ENCODE measurements at regions of chr11 and their contacts with region 1.

Region 1: DNA sequence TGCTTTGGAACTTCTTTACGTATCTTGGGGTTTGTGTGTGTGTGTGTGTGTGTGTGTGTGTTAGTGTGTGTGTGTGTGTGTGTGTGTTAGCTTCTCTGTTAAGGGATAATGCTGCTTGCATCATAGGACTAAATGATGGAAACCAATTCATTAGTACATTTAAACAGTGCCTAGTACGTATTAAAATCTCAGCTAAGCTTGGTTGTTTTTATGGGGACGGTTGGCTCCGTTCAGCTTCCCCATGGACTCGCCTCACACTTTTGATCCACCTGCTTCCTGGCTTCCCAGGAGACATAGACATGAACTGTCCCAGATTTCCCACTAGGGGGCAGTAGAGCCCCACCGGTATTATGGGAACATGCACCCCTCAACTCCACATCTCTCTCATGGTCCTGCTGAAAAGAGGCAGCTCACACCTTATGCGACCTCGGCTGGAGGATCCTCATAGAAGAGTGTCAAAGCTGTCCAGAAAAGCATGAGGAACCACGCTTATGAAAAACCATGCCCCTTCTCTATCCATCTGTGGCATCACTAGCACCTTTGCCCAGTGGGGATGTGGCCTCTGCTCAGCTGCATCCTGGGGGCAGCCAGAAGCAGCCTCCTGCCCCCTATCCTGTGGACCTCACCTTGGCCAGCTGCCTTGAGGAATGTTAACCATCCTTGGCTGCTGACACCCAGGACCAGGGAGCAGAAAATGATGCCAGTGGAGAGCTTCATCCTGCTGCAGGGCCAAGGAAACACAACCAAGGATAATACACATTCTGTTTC is 9.7 kb upstream of the SAAL1 start:
- DNase-seq: peak; percentile 77
- ATAC-seq: peak; percentile 95
- H3K4me3 Mint-ChIP-seq: no peak overlapping the region
- H3K27ac Mint-ChIP-seq: no peak overlapping the region
- H3K4me1 Mint-ChIP-seq: peaks cover 4% of the 10 kb centered on the region
- H3K27me3 Mint-ChIP-seq: peaks cover 27% of the 10 kb centered on the region

Region 2: GRCh38 chr11:18145025-18145424 is 29.5 kb after region 1 on chr11:
- CTCF ChIA-PET with region 1: interaction called, 11 read pairs
- DNase-seq: no peak
- ATAC-seq: no peak
- H3K4me3 Mint-ChIP-seq: no peak overlapping the region
- H3K27ac Mint-ChIP-seq: no peak overlapping the region
- H3K4me1 Mint-ChIP-seq: peaks cover 8% of the 10 kb centered on the region
- H3K27me3 Mint-ChIP-seq: peaks cover 56% of the 10 kb centered on the region

Region 3: DNA sequence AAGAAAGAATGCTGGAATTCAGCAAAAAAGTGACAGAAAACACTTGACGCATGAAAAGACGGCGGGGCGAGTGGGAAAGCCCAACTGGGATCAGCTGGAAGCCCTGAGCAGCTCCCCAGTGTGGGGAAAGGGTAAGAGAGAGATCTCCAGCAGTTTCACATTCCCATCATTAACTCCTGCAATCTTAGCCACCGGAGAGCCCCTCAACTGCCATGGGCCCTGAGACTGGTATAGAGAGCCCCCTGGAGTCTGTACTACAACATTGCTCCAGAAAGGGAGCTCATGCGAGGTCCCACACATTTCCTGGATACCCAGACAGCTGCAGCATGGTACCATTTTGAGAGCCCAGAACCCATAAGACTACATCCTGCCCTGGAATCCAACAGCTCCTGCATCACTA is 88.2 kb after region 1 on chr11:
- CTCF ChIA-PET with region 1: interaction called, 22 read pairs
- DNase-seq: no peak
- ATAC-seq: no peak
- H3K4me3 Mint-ChIP-seq: no peak overlapping the region
- H3K27ac Mint-ChIP-seq: no peak overlapping the region
- H3K4me1 Mint-ChIP-seq: peaks cover 14% of the 10 kb centered on the region
- H3K27me3 Mint-ChIP-seq: peaks cover 46% of the 10 kb centered on the region

Region 4: DNA sequence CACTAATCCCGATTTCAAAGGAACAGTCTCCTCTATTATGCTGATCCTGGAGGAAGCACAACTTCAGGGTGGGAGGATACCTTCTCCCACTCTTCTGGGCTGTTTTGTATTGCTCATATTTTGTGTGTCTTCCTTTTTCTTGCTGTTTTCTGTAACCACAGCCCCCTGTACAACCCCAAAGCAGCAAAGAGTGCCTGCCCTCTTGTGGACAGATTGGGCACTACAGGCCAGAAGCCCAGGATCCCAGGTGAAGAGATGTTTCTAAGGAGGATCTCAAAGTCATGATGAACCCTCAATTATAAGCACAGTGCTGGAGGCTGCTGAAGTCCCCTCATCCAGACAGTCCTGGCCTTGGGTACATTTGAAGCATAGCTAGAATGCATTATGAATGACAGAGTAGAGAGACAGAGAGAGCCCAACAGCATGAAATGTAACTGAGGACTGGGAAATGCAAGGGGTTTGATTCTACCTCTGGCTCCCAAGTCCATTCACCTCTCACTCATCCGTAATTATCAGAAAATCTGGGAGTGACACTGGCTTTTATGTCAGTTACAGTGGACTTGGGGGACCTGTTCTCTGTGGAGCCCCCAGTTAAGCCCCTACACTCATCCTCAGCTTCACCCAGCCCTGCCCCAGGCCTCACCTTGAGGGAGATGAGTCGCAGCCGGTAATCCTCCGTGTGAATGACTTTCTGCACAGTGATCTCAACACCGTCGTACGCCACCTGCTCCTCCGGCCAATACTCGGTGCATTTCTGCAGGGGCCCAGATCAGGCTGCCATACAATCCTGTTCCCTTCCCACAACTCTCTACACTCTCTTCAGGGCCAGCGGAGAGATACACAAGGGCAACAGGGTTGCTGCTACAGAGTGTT is 616.6 kb after region 1 on chr11:
- CTCF ChIA-PET with region 1: interaction called, 12 read pairs
- DNase-seq: peak; percentile 72
- ATAC-seq: peak; percentile 77
- H3K4me3 Mint-ChIP-seq: no peak overlapping the region
- H3K27ac Mint-ChIP-seq: no peak overlapping the region
- H3K4me1 Mint-ChIP-seq: peaks cover 5% of the 10 kb centered on the region
- H3K27me3 Mint-ChIP-seq: no peaks in the 10 kb centered on the region